A673 (cell line): ENCODE measurements at regions of chr10 and their contacts with region 1.

Region 1: DNA sequence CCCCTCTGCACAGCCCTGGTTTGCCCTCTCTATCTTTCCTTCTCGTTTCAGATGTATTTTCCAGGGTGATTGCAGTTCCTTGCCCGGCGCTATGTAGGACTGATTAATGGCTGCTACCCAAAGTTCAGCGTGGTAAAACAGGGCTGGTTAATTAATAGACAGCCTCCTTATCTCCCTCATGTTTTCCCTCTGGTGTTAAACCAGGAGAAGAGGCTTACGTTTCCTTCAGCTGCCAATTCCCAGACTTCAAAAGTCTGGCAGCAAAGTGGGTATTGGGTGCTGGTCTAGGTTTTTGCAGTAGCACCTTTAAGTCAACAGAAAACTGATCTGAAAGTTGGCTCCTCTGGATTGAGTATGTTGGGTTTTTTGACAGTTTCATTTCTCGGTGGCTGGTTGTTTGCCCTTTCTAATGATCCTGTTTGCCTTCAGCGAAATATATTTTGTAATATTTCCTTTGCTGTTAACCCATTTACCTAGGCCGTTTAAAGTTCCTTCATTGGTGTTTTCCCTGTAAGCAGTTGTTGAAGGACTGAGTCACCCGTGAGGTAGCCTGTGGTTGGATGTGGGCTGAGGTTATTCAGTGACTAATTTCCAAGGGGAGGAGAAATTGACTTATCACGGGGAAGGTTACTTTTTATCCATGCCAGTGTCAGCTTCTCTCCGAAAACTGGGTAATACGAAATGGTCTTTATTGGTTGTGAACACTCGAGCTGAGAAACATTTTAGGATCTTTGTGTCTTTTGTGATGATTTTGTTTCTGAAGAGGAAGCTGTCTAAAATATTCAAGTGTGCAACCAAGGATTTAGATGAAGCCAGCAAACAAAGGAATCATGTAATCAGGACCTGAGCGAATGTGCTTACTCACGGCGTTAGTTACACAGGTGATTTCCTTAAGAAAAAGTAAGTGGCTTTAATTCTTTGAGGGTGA is 257.2 kb downstream of the KIAA1217 start:
- DNase-seq: peak; percentile 80
- H3K4me3 ChIP-seq: peak overlapping the region; percentile 46
- H3K27ac ChIP-seq: peak overlapping the region; percentile 88
- H3K4me1 ChIP-seq: peaks cover 65% of the 10 kb centered on the region
- H3K27me3 ChIP-seq: no peaks in the 10 kb centered on the region
- CTCF ChIP-seq: no peak

Region 2: GRCh38 chr10:24415455-24416125 is 50.6 kb before region 1 on chr10:
- CTCF ChIA-PET with region 1: no interaction called
- POLR2A ChIA-PET with region 1: no interaction called
- intact Hi-C with region 1: loop called (anchors 5 kb)
- DNase-seq: peak; percentile 95
- H3K4me3 ChIP-seq: no peak overlapping the region
- H3K27ac ChIP-seq: peak overlapping the region; percentile 70
- H3K4me1 ChIP-seq: peaks cover 38% of the 10 kb centered on the region
- H3K27me3 ChIP-seq: no peaks in the 10 kb centered on the region
- CTCF ChIP-seq: no peak

Region 3: DNA sequence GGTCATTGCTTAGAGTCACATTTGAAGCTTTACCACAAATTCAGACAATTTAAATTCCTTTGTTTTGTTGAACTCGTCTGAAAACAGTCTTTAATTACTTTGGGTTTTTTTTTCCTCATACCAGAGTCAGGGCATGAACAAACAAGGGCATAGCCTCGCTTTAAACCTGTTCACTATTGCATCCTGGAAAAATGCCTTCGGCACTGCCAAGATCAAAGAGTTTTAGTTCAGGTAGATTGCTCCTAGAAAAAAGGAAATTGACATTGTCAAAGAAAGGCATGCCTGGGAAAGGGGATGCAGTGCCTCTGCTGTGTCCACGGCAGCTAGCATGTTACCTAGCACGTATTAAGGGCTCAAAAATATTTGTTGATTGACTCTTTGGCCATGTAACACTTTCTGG is 22.5 kb after region 1 on chr10:
- CTCF ChIA-PET with region 1: no interaction called
- POLR2A ChIA-PET with region 1: interaction called, 28 read pairs
- intact Hi-C with region 1: no loop called
- DNase-seq: no peak
- H3K4me3 ChIP-seq: no peak overlapping the region
- H3K27ac ChIP-seq: no peak overlapping the region
- H3K4me1 ChIP-seq: peaks cover 19% of the 10 kb centered on the region
- H3K27me3 ChIP-seq: no peaks in the 10 kb centered on the region
- CTCF ChIP-seq: no peak

Region 4: GRCh38 chr10:24503461-24504320 is 37.5 kb after region 1 on chr10:
- CTCF ChIA-PET with region 1: no interaction called
- POLR2A ChIA-PET with region 1: no interaction called
- intact Hi-C with region 1: loop called (anchors 5 kb)
- DNase-seq: peak; percentile 84
- H3K4me3 ChIP-seq: no peak overlapping the region
- H3K27ac ChIP-seq: peak overlapping the region; percentile 84
- H3K4me1 ChIP-seq: peaks cover 61% of the 10 kb centered on the region
- H3K27me3 ChIP-seq: no peaks in the 10 kb centered on the region
- CTCF ChIP-seq: peak; percentile 82